ENCODE measurements at regions of chr12 and their contacts with region 1.

Region 1: DNA sequence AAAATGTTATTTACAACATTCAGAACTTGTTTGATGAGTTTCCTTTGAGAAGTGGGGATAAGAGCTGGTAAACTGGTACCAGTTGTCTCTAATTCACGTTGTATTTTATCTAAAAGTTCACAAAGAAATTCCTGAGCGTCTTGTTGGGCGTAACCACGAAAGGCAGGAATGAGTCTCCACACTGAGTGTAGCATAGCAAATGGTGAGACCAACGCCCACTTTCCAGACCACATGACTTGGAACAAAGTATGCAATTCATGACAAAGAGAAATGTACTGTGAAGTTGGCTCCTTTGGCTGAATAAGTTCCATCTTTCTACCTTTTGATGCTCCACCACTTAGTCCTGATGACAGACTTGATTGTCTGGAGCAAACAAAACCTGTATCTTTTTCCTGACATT is 18.4 kb downstream of the USP44 start:
- DNase-seq: no peak
- H3K4me3 Mint-ChIP-seq: no peak overlapping the region
- H3K27ac Mint-ChIP-seq: no peak overlapping the region
- H3K4me1 Mint-ChIP-seq: peaks cover 12% of the 10 kb centered on the region
- H3K27me3 Mint-ChIP-seq: no peaks in the 10 kb centered on the region

Region 2: DNA sequence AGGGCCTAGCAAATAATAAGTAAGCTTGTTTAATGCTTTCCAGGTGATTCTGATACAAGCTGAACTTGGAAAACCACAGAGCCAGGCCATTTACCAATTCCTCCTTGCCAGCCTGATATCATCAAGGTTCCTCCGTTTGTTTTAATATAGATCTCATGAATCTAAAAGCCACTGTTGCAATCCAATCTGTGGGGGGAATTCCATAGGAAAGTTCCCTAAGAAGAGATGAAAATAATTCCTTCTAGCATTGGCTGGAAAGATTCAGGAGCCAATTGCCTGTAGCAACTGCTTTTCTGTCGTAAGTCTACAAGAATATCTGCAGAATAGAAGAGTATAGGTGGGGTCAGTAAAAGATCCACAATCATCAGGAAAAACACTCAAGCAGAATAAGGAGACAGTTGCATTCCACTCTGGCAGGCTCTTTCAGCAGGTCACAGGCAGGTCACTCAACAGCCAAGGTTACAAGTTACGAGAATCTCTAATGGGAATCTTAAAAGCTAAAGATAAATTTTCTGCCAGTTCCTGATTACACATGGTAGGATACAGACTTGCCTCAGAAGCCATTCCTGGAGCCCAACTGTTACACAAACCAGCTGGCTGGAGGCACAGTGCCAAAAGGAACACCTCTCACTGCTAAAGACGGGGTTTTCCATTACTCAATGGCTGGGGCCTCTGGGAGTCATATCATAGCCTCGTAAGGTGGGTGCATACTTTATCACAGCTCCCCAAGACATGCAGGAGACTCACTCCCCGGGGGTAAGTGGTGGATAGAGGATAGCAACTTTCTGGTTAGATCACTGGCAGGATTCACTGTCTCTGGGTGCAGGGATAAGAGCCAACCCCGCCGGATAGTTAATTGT is 359.2 kb before region 1 on chr12:
- CTCF ChIA-PET with region 1: no interaction called
- intact Hi-C with region 1: no loop called
- DNase-seq: no peak
- H3K4me3 Mint-ChIP-seq: no peak overlapping the region
- H3K27ac Mint-ChIP-seq: no peak overlapping the region
- H3K4me1 Mint-ChIP-seq: no peaks in the 10 kb centered on the region
- H3K27me3 Mint-ChIP-seq: no peaks in the 10 kb centered on the region

Region 3: DNA sequence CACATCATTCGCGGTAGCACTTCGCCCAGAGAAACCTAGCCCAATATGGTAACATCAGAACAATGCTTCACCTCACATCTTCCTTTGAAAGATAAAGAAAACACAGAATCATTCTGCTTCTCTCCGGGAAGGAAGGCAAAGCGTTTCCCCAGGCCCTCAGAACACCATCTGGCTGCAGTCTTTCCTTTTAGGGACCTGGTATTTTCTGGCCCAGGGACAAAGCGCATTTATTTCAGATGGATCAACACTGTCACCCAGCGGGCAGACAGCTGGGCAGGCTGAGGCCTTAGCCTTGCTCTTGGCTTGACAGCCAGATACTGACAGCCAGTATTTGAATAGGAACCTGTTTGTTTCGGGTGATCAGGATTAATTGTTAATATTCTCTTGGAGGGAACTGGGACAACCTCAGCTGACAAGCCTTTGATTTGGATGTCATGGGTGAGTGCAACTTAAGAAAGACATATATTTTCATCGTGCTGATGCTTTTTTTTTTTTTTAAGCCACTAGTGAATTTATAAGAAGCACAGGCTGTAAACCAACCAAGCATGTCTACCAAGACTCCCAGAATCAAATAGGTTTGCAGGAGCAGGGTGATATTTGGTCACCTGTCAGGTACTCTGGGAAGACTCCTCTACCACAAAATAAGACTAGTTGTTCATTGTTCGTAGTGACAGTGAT is 196.3 kb before region 1 on chr12:
- CTCF ChIA-PET with region 1: interaction called, 16 read pairs
- intact Hi-C with region 1: loop called (anchors 1 kb)
- DNase-seq: no peak
- H3K4me3 Mint-ChIP-seq: no peak overlapping the region
- H3K27ac Mint-ChIP-seq: no peak overlapping the region
- H3K4me1 Mint-ChIP-seq: peaks cover 5% of the 10 kb centered on the region
- H3K27me3 Mint-ChIP-seq: no peaks in the 10 kb centered on the region

Measured in activated naive CD4-positive, alpha-beta T cell treated with anti-CD3 and anti-CD28 coated beads for 36 hours (primary cell).